Vagina (tissue), 2 donors: ENCODE measurements at regions of chr1 and their contacts with region 1.

Region 1: DNA sequence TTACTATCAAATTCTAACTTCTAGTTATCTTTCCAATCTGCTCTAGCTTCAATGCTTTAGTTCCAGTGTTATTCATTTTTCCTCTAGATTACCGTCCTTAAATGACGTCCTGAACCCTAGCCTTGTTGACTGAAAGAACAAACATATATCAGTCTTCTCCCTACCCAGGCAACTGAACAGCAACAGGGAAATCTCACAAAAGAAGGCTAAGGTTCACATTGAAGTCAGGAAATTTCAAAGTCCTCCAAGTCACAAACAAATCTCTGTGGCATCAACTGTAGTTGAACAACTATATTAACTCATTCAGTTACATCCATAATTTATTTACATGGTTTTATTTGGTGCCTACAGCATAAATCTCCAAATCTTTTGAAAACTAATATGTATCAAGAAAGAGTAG is 19.5 kb downstream of the FOXJ3 start:
- DNase-seq: no peak
- H3K4me3 ChIP-seq: no peak overlapping the region
- H3K27ac ChIP-seq: no peak overlapping the region
- H3K4me1 ChIP-seq: peaks cover 65% of the 10 kb centered on the region
- H3K27me3 ChIP-seq: no peaks in the 10 kb centered on the region
- CTCF ChIP-seq: no peak
- POLR2A ChIP-seq: no peak

Region 2: GRCh38 chr1:42335050-42335808 is 19.7 kb after region 1 on chr1 and contains the start of gene FOXJ3:
- intact Hi-C with region 1: loop called (anchors 2 kb)
- DNase-seq: peak in 1 of 2 donors; percentile 91
- H3K4me3 ChIP-seq: peak within 1 kb of the TSS; percentile 77 to 79
- H3K27ac ChIP-seq: peak within 1 kb of the TSS; percentile 87
- H3K4me1 ChIP-seq: peaks cover 37% of the 10 kb centered on the region
- H3K27me3 ChIP-seq: no peaks in the 10 kb centered on the region
- CTCF ChIP-seq: peak in 2 of 3 experiments; percentile 3 to 33
- POLR2A ChIP-seq: peak in 1 of 2 donors; percentile 35
- total RNA-seq, gene FOXJ3: 59.9 TPM

Region 3: GRCh38 chr1:42518908-42519307 is 203.4 kb after region 1 on chr1:
- intact Hi-C with region 1: no loop called
- DNase-seq: no peak
- H3K4me3 ChIP-seq: no peak overlapping the region
- H3K27ac ChIP-seq: no peak overlapping the region
- H3K4me1 ChIP-seq: no peaks in the 10 kb centered on the region
- H3K27me3 ChIP-seq: no peaks in the 10 kb centered on the region
- CTCF ChIP-seq: no peak
- POLR2A ChIP-seq: no peak